K562 (cell line): ENCODE measurements at regions of chr14 and their contacts with region 1.

Region 1: GRCh38 chr14:35695647-35696046 is 113.4 kb downstream of the RALGAPA1 start:
- DNase-seq: no peak
- ATAC-seq: no peak
- H3K4me3 ChIP-seq: no peak overlapping the region
- H3K27ac ChIP-seq: no peak overlapping the region
- H3K4me1 ChIP-seq: no peaks in the 10 kb centered on the region
- H3K27me3 ChIP-seq: no peaks in the 10 kb centered on the region
- CTCF ChIP-seq: no peak
- EP300 ChIP-seq: no peak
- POLR2A ChIP-seq: no peak
- RAD21 ChIP-seq: no peak

Region 2: GRCh38 chr14:35229495-35230089 is 466.1 kb before region 1 on chr14:
- CTCF ChIA-PET with region 1: no interaction called
- POLR2A ChIA-PET with region 1: no interaction called
- in situ Hi-C with region 1: loop called (anchors 10 kb)
- intact Hi-C with region 1: no loop called
- DNase-seq: peak; percentile 3 to 14 (median 14)
- ATAC-seq: no peak
- H3K4me3 ChIP-seq: no peak overlapping the region
- H3K27ac ChIP-seq: no peak overlapping the region
- H3K4me1 ChIP-seq: no peaks in the 10 kb centered on the region
- H3K27me3 ChIP-seq: no peaks in the 10 kb centered on the region
- CTCF ChIP-seq: peak; percentile 5 to 49 (median 29); a peak in 3 of 6 replicates
- EP300 ChIP-seq: no peak
- POLR2A ChIP-seq: no peak
- RAD21 ChIP-seq: peak; percentile 56 to 60